ENCODE measurements at regions of chr6 and their contacts with region 1.

Region 1: GRCh38 chr6:5751525-5752390 is 255.0 kb downstream of the NRN1 start:
- DNase-seq: no peak
- H3K4me3 ChIP-seq: no peak overlapping the region
- H3K27ac ChIP-seq: no peak overlapping the region
- H3K4me1 ChIP-seq: no peaks in the 10 kb centered on the region
- H3K27me3 ChIP-seq: no peaks in the 10 kb centered on the region
- CTCF ChIP-seq: no peak
- POLR2A ChIP-seq: no peak

Region 2: DNA sequence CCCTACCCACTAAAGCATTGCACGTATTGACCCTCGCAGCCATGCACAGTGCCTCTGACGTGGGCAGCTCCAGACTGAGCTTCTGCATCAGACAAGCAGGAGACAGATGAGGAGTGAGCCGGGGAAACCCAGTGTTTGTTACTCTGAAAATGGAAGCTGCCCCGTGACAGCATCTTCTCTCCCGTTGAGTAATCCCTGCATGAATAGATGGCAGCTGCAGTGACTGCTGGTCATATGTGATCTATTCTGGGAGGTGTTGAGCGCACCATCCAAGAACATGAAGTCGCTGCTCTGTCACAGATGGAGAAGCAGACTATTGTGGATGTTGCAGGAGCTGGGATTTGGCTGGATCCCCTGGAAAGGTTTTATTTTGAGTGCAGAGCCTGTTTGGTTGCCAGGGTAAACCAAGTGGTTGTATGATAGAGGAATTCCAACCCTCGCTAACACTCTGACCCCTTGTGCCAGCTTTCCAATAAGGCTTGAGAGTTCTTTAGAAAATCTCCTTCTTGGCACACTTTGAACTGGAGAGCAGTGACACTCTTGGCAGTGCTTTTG is 12.7 kb after region 1 on chr6:
- intact Hi-C with region 1: loop called (anchors 2 kb)
- DNase-seq: peak in 1 of 2 donors; percentile 55
- H3K4me3 ChIP-seq: no peak overlapping the region
- H3K27ac ChIP-seq: no peak overlapping the region
- H3K4me1 ChIP-seq: no peaks in the 10 kb centered on the region
- H3K27me3 ChIP-seq: no peaks in the 10 kb centered on the region
- CTCF ChIP-seq: no peak
- POLR2A ChIP-seq: no peak

Measured in vagina (tissue), 2 donors.